Calu3 (cell line): ENCODE measurements at regions of chr11 and their contacts with region 1.

Region 1: GRCh38 chr11:128290106-128290840 is 297.1 kb downstream of the ETS1 start:
- DNase-seq: peak; percentile 58
- H3K4me3 Mint-ChIP-seq: peak overlapping the region; percentile 30
- H3K27ac Mint-ChIP-seq: peak overlapping the region; percentile 82
- H3K4me1 Mint-ChIP-seq: peaks cover 30% of the 10 kb centered on the region
- H3K27me3 Mint-ChIP-seq: no peaks in the 10 kb centered on the region
- CTCF ChIP-seq: peak; percentile 35

Region 2: GRCh38 chr11:128279866-128280265 is 10.4 kb before region 1 on chr11:
- CTCF ChIA-PET with region 1: no interaction called
- intact Hi-C with region 1: no loop called
- DNase-seq: no peak
- H3K4me3 Mint-ChIP-seq: no peak overlapping the region
- H3K27ac Mint-ChIP-seq: peak overlapping the region; percentile 27
- H3K4me1 Mint-ChIP-seq: no peaks in the 10 kb centered on the region
- H3K27me3 Mint-ChIP-seq: no peaks in the 10 kb centered on the region
- CTCF ChIP-seq: no peak

Region 3: GRCh38 chr11:128448200-128448886 is 158.1 kb after region 1 on chr11:
- CTCF ChIA-PET with region 1: interaction called, 3 read pairs
- intact Hi-C with region 1: loop called (anchors 1 kb)
- DNase-seq: peak; percentile 84
- H3K4me3 Mint-ChIP-seq: no peak overlapping the region
- H3K27ac Mint-ChIP-seq: peak overlapping the region; percentile 96
- H3K4me1 Mint-ChIP-seq: peaks cover 47% of the 10 kb centered on the region
- H3K27me3 Mint-ChIP-seq: no peaks in the 10 kb centered on the region
- CTCF ChIP-seq: no peak

Region 4: DNA sequence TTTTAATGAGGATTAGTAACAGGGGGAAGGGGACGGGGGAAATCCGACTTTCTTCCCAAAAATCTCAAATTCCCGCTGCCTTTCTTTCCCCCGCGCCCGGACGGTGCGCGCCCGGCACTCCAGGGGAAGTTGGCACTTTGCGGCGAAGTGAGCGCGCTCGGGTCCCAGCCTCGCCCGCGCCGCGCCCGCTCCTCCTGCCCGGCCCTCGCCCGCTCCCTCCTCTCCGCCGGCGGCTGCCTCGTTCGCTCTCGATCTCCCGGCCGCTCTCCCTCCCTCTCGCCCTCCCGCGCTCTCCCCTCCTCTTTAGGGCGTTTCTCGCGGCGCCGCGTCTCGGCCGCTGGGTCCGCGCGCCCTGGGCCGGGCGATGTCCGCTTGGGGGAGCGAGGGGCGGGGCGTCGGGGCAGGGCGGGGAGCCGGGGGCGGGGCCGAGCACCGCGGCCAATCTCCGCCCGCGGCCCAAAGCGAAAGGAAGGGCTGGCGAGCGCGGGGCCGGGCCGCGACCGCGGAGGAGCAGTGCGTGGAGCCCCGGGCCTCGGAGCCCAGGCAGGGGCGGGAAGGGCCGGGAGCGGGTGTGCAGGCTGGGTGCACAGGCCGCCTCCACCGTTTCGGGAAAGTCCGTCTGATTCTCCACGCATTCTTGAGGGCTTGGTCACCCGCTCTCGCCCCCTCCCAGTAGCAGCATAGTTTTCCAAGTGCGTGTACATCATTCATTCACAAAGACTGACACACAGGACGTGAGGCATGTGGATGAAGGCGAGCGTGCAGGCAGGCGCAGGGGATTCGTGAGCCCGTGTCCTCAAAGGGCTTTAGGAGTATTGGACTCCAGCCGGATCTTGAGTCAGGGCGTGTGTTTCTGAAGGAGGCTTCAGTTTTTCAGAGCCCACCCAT is 232.0 kb after region 1 on chr11:
- CTCF ChIA-PET with region 1: no interaction called
- intact Hi-C with region 1: loop called (anchors 10 kb)
- DNase-seq: peak; percentile 88
- H3K4me3 Mint-ChIP-seq: peak overlapping the region; percentile 76
- H3K27ac Mint-ChIP-seq: peak overlapping the region; percentile 65
- H3K4me1 Mint-ChIP-seq: peaks cover 48% of the 10 kb centered on the region
- H3K27me3 Mint-ChIP-seq: no peaks in the 10 kb centered on the region
- CTCF ChIP-seq: no peak

Region 5: GRCh38 chr11:128669506-128670270 is 379.4 kb after region 1 on chr11:
- CTCF ChIA-PET with region 1: interaction called, 10 read pairs
- intact Hi-C with region 1: no loop called
- DNase-seq: no peak
- H3K4me3 Mint-ChIP-seq: no peak overlapping the region
- H3K27ac Mint-ChIP-seq: no peak overlapping the region
- H3K4me1 Mint-ChIP-seq: no peaks in the 10 kb centered on the region
- H3K27me3 Mint-ChIP-seq: no peaks in the 10 kb centered on the region
- CTCF ChIP-seq: no peak